Mammary epithelial cell (primary cell): ENCODE measurements at regions of chr12 and their contacts with region 1.

Region 1: DNA sequence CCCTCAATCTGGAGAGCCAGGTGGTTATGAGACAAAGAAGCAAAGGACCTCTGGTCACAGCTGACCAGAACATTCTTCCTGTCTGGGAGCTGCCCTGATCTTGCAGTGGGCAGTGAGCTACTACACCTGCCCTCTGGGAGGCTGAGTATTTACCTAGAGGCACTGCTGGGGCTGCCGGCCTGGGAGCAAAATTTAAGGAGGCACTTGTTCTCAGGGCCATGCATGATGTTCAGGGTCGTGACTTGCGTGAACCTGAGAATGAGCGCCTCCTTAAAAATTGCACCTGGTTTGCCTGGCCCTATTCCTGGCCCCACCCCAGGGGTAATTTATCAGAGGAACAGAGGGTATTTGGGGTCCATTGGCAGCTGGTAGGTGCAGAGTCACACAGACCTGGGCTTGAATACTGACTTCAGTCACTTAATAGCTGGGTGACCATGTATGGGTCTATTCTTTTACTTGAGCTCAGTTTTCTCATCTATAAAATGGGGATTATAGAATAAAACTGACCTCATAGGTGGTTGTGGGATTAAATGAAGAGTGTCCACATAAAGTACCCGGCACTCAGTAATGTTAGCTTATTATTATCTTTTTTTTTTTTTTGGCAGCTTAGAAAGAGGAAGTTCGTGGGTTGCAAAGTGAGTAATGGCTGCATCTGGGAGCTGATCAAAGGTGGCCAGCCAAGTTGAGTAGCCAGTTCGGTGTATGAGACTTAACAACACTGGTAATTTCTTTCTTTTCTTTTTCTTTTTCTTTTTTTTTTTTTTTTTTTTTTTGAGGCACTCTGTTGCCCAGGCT is 107.4 kb upstream of the MED13L start:
- DNase-seq: peak; percentile 44
- H3K4me3 ChIP-seq: no peak overlapping the region
- H3K27ac ChIP-seq: no peak overlapping the region
- H3K4me1 ChIP-seq: peaks cover 30% of the 10 kb centered on the region
- H3K27me3 ChIP-seq: no peaks in the 10 kb centered on the region
- CTCF ChIP-seq: no peak

Region 2: DNA sequence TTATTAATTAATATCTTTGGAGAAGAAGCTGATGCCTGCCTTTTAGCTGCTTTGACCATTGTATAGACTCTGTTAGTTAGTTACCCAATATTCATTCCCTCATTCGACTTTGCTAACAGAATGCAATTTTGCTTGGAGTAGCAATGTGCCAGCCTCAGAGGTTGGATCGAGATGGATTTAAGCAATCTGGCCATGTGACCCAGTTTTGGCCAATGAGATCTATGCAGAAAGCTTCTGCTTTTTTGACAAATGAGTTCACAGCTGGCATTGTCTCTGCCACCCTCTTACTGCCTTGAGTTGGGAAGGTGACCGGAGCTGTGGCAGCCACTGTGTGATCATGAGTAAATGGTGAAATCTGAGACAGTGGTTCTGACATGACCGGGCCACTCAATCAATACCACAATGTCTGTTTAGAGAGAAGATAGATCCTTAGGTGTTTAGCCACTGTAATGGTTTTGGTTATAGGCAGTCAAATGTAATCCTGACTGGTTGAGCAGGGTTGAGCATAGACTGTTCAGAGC is 32.5 kb before region 1 on chr12:
- CTCF ChIA-PET with region 1: no interaction called
- dilution Hi-C with region 1: loop called (anchors 5 kb)
- in situ Hi-C with region 1: no loop called
- intact Hi-C with region 1: no loop called
- DNase-seq: no peak
- H3K4me3 ChIP-seq: no peak overlapping the region
- H3K27ac ChIP-seq: no peak overlapping the region
- H3K4me1 ChIP-seq: no peaks in the 10 kb centered on the region
- H3K27me3 ChIP-seq: no peaks in the 10 kb centered on the region
- CTCF ChIP-seq: no peak